Posterior vena cava (tissue), 2 donors: ENCODE measurements at regions of chr16 and their contacts with region 1.

Region 1: DNA sequence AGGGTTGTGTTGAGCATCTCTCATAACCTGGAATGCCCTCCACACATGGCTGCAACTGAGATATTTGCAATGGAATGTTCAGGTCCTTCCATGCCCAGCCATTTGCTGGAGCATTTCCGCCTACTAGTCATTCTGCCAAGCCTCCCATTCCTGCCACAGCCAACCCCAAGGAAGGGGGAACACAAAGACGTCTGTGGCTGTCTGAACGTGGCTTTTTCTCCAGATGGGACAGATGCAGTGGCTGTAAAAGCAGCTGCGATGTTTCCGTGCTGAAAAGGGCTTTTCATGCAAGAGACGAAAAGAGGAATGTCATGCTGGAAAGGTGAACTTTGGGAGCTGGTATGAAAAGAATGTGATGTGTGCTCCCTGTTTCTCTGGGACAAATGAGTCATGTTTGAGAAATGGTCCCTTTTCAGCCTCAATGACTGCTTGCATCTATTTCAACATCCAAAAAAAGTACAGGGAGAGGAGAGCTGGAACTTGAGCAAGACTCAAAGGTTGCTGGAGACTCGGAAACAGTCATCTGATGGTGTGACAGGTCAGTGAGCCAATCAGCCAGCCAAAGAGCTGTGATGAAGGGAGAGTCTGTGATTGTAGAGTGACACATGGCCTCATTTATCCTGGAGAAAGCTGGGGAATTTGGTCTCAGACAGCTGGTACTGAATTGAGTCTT is 208.9 kb downstream of the SHISA9 start:
- DNase-seq: no peak

Region 2: GRCh38 chr16:13083681-13084080 is 26.6 kb before region 1 on chr16:
- intact Hi-C with region 1: loop called in 1 of 2 experiments (anchors 1 kb)
- DNase-seq: no peak

Region 3: GRCh38 chr16:13130586-13130985 is 20.3 kb after region 1 on chr16:
- intact Hi-C with region 1: no loop called
- DNase-seq: no peak

Region 4: GRCh38 chr16:13185793-13186192 is 75.5 kb after region 1 on chr16:
- intact Hi-C with region 1: loop called in 1 of 2 experiments (anchors 2 kb)
- DNase-seq: no peak